ENCODE measurements at regions of chr9 and their contacts with region 1.

Region 1: GRCh38 chr9:93552923-93553322 is 23.5 kb upstream of the PHF2 start:
- DNase-seq: no peak
- H3K4me3 Mint-ChIP-seq: no peak overlapping the region
- H3K27ac Mint-ChIP-seq: no peak overlapping the region
- H3K4me1 Mint-ChIP-seq: no peaks in the 10 kb centered on the region
- H3K27me3 Mint-ChIP-seq: no peaks in the 10 kb centered on the region

Region 2: GRCh38 chr9:93297659-93298497 is 255.0 kb before region 1 on chr9:
- CTCF ChIA-PET with region 1: no interaction called
- DNase-seq: no peak
- H3K4me3 Mint-ChIP-seq: no peak overlapping the region
- H3K27ac Mint-ChIP-seq: no peak overlapping the region
- H3K4me1 Mint-ChIP-seq: peaks cover 17% of the 10 kb centered on the region
- H3K27me3 Mint-ChIP-seq: peaks cover 9% of the 10 kb centered on the region

Region 3: GRCh38 chr9:93566408-93567270 is 13.7 kb after region 1 on chr9:
- CTCF ChIA-PET with region 1: interaction called, 13 read pairs
- DNase-seq: peak; percentile 98
- H3K4me3 Mint-ChIP-seq: peak overlapping the region; percentile 84
- H3K27ac Mint-ChIP-seq: peak overlapping the region; percentile 90
- H3K4me1 Mint-ChIP-seq: peaks cover 28% of the 10 kb centered on the region
- H3K27me3 Mint-ChIP-seq: no peaks in the 10 kb centered on the region

Measured in activated naive CD4-positive, alpha-beta T cell treated with anti-CD3 and anti-CD28 coated beads, Interleukin-2, amount 10 ng/mL, durations not matched to agents 7 days and 5 days (primary cell).